Activated CD8-positive, alpha-beta T cell treated with anti-CD3 and anti-CD28 coated beads, Interleukin-2, amount 10 ng/mL, durations not matched to agents 7 days and 5 days (primary cell): ENCODE measurements at regions of chr18 and their contacts with region 1.

Region 1: GRCh38 chr18:63518178-63519012 is 23.8 kb upstream of the SERPINB12 start:
- DNase-seq: peak; percentile 77
- ATAC-seq: peak; percentile 90
- H3K4me3 Mint-ChIP-seq: no peak overlapping the region
- H3K27ac Mint-ChIP-seq: no peak overlapping the region
- H3K4me1 Mint-ChIP-seq: no peaks in the 10 kb centered on the region
- H3K27me3 Mint-ChIP-seq: peaks cover 25% of the 10 kb centered on the region

Region 2: DNA sequence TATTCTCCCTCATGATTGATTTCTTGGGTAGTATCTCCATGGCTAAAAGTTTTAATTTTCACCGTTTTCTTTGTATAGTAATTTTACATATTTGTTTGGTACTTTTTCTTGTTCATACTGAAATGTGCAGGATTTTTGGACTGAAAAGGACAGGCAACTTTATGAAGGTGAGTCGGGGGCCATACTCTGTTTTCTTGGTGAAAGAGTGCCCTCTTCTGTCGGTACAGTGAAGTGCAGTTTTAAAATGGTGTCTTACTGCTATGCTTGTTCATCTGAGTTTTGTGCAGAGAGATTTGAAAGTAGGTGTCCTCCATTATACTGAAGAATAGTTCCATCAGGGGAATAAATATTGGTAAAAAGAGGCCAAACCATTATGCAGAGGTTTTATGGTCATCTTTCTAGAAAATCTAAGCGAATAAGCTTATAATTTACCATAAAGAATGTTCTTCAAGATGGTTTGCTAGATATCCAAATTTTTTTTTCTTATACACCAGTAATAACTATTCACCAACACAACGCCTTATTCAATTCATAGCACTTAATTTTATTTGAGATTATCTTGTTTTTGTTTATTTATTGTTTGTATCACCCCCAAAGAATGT is 60.1 kb after region 1 on chr18:
- CTCF ChIA-PET with region 1: interaction called, 108 read pairs
- POLR2A ChIA-PET with region 1: interaction called, 3 read pairs
- DNase-seq: peak; percentile 35
- ATAC-seq: peak; percentile 47
- H3K4me3 Mint-ChIP-seq: no peak overlapping the region
- H3K27ac Mint-ChIP-seq: no peak overlapping the region
- H3K4me1 Mint-ChIP-seq: no peaks in the 10 kb centered on the region
- H3K27me3 Mint-ChIP-seq: peaks cover 11% of the 10 kb centered on the region

Region 3: GRCh38 chr18:63844254-63844653 is 325.9 kb after region 1 on chr18:
- CTCF ChIA-PET with region 1: interaction called, 13 read pairs
- POLR2A ChIA-PET with region 1: no interaction called
- DNase-seq: no peak
- ATAC-seq: no peak
- H3K4me3 Mint-ChIP-seq: no peak overlapping the region
- H3K27ac Mint-ChIP-seq: no peak overlapping the region
- H3K4me1 Mint-ChIP-seq: no peaks in the 10 kb centered on the region
- H3K27me3 Mint-ChIP-seq: peaks cover 17% of the 10 kb centered on the region

Region 4: GRCh38 chr18:63936156-63936931 is 417.9 kb after region 1 on chr18:
- CTCF ChIA-PET with region 1: interaction called, 26 read pairs
- POLR2A ChIA-PET with region 1: no interaction called
- DNase-seq: peak; percentile 72
- ATAC-seq: peak; percentile 95
- H3K4me3 Mint-ChIP-seq: peak overlapping the region; percentile 56
- H3K27ac Mint-ChIP-seq: no peak overlapping the region
- H3K4me1 Mint-ChIP-seq: peaks cover 5% of the 10 kb centered on the region
- H3K27me3 Mint-ChIP-seq: peaks cover 21% of the 10 kb centered on the region